Endothelial cell of umbilical vein (primary cell): ENCODE measurements at regions of chr11 and their contacts with region 1.

Region 1: DNA sequence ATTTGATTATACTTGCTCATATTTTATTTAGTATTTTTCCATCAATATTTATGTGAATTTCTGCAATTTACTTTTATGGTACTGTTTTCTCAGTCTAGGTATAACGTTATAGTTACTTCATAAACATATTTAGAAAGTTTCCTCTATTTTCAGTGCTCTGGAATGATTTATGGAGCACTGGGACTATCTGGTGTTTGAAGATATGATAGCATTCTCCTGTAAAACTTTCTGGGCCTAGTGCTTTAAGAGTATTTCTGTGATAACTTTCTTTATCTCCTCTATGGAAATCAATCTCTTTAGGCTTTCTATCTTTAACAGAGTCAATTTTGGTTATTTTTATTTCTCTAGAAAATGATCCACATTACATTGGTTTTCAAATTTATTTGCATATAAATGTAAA is 85.1 kb downstream of the SOX6 start:
- DNase-seq: no peak
- H3K4me3 ChIP-seq: no peak overlapping the region
- H3K27ac ChIP-seq: no peak overlapping the region
- H3K4me1 ChIP-seq: no peaks in the 10 kb centered on the region
- H3K27me3 ChIP-seq: no peaks in the 10 kb centered on the region
- CTCF ChIP-seq: no peak
- POLR2A ChIP-seq: no peak

Region 2: GRCh38 chr11:16191212-16191867 is 79.9 kb before region 1 on chr11:
- CTCF ChIA-PET with region 1: no interaction called
- POLR2A ChIA-PET with region 1: no interaction called
- dilution Hi-C with region 1: no loop called
- intact Hi-C with region 1: loop called (anchors 5 kb)
- DNase-seq: no peak
- H3K4me3 ChIP-seq: no peak overlapping the region
- H3K27ac ChIP-seq: no peak overlapping the region
- H3K4me1 ChIP-seq: no peaks in the 10 kb centered on the region
- H3K27me3 ChIP-seq: no peaks in the 10 kb centered on the region
- CTCF ChIP-seq: no peak
- POLR2A ChIP-seq: no peak